SK-N-SH (cell line): ENCODE measurements at regions of chr1 and their contacts with region 1.

Region 1: GRCh38 chr1:34742667-34743270 is 12.1 kb upstream of the GJB5 start:
- DNase-seq: peak; percentile 91
- H3K4me3 ChIP-seq: no peak overlapping the region; a peak in 1 of 4 replicates
- H3K27ac ChIP-seq: no peak overlapping the region
- H3K4me1 ChIP-seq: peaks cover 0 to 8% of the 10 kb centered on the region in 2 experiments; a peak in 1 of 4 replicates
- H3K27me3 ChIP-seq: no peaks in the 10 kb centered on the region
- CTCF ChIP-seq: peak; percentile 82
- EP300 ChIP-seq: no peak
- RAD21 ChIP-seq: peak; percentile 95

Region 2: DNA sequence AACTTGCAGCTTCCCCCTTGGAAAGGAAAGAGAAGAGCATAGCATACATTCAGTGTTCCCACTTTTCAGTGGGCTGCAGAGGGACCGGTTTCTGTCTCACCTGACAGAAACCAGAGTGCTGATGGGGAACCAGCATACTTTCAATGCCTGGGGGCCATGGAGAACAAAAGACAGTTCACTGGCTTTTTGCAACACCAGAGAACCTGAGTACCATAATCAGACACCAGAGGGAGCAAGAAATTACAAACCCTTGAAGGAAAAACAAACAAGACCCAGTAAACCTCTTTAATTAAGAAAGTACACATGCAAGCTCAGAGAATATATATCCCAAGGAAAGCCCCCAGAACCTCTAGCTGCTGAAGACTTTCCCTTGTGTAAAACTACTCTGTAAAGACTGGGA is 628.9 kb before region 1 on chr1:
- CTCF ChIA-PET with region 1: interaction called, 13 read pairs
- POLR2A ChIA-PET with region 1: no interaction called
- DNase-seq: peak; percentile 30
- H3K4me3 ChIP-seq: no peak overlapping the region
- H3K27ac ChIP-seq: no peak overlapping the region
- H3K4me1 ChIP-seq: no peaks in the 10 kb centered on the region
- H3K27me3 ChIP-seq: no peaks in the 10 kb centered on the region
- CTCF ChIP-seq: no peak
- EP300 ChIP-seq: no peak
- RAD21 ChIP-seq: peak; percentile 45; the same call in 1 of the 2 replicates

Region 3: DNA sequence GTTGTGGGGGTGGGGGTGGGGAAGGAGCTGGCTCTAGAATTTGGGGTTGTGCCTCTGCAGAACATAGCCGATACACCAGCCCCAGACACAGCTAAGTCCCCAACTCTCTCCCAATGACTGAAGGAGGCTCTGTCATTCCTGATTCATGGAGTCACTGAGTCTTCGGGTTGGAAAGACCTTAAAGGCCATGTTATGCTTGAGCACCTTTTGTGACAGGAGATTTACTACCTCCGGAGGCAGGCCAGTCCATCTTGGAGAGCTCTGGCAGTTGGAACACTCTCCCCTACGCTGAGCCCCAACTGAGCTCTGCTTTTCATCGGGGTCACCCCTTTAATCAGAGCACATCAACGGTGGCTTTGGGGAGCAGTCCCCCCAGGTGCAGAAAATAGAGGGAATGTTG is 272.4 kb before region 1 on chr1:
- CTCF ChIA-PET with region 1: interaction called, 10 read pairs
- POLR2A ChIA-PET with region 1: no interaction called
- DNase-seq: no peak
- H3K4me3 ChIP-seq: no peak overlapping the region
- H3K27ac ChIP-seq: no peak overlapping the region
- H3K4me1 ChIP-seq: no peaks in the 10 kb centered on the region
- H3K27me3 ChIP-seq: no peaks in the 10 kb centered on the region
- CTCF ChIP-seq: no peak
- EP300 ChIP-seq: no peak
- RAD21 ChIP-seq: no peak

Region 4: GRCh38 chr1:34681480-34682451 is 61.0 kb before region 1 on chr1:
- CTCF ChIA-PET with region 1: interaction called, 34 read pairs
- POLR2A ChIA-PET with region 1: no interaction called
- DNase-seq: peak; percentile 66
- H3K4me3 ChIP-seq: peak overlapping the region in 1 of 2 experiments; percentile 23; a peak in 1 of 4 replicates
- H3K27ac ChIP-seq: no peak overlapping the region
- H3K4me1 ChIP-seq: no peaks in the 10 kb centered on the region
- H3K27me3 ChIP-seq: no peaks in the 10 kb centered on the region
- CTCF ChIP-seq: peak; percentile 52
- EP300 ChIP-seq: no peak
- RAD21 ChIP-seq: peak; percentile 79

Region 5: GRCh38 chr1:34705077-34705476 is 37.7 kb before region 1 on chr1:
- CTCF ChIA-PET with region 1: interaction called, 12 read pairs
- POLR2A ChIA-PET with region 1: no interaction called
- DNase-seq: peak; percentile 17
- H3K4me3 ChIP-seq: no peak overlapping the region
- H3K27ac ChIP-seq: no peak overlapping the region
- H3K4me1 ChIP-seq: peaks cover 0 to 15% of the 10 kb centered on the region in 2 experiments; a peak in 2 of 4 replicates
- H3K27me3 ChIP-seq: no peaks in the 10 kb centered on the region
- CTCF ChIP-seq: no peak
- EP300 ChIP-seq: peak in 1 of 2 experiments; percentile 32; a peak in 1 of 4 replicates
- RAD21 ChIP-seq: no peak

Region 6: GRCh38 chr1:34759503-34760357 is 17.0 kb after region 1 on chr1 and contains the start of gene GJB4:
- CTCF ChIA-PET with region 1: interaction called, 57 read pairs
- POLR2A ChIA-PET with region 1: no interaction called
- DNase-seq: no peak
- H3K4me3 ChIP-seq: no peak within 1 kb of the TSS
- H3K27ac ChIP-seq: no peak within 1 kb of the TSS
- H3K4me1 ChIP-seq: no peaks in the 10 kb centered on the region
- H3K27me3 ChIP-seq: no peaks in the 10 kb centered on the region
- CTCF ChIP-seq: no peak
- EP300 ChIP-seq: no peak
- RAD21 ChIP-seq: no peak
- polyA plus RNA-seq, gene GJB4: not detected in 2 replicates